ENCODE measurements at regions of chr2 and their contacts with region 1.

Region 1: DNA sequence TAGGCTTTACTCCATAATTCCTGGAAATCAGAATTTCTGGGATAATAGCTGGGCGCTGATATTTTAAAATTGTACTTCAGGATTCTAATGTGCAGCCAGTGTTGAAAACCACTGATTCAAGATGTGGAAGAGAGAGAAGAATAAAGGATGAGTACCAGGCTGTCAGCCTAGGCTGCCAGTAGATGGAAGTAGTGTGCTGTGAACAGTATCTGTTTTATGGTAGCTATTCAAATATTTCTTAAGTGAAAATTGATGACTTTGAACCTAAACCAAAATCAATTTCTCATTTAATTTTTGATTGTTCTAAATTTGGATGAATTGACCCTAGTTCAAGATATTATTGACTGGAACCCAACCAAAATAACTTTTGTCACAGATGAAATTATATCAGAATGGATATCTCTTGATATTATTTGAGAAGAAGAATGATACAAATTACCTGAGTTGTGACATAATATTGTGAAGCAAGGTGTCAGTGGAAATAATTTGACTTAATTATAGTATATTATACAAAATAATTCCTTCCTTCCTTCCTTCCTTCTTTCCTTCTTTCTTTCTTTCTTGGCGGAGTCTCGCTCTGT is 88.1 kb downstream of the COMMD1 start:
- DNase-seq: peak in 2 of 5 donors; percentile 6 to 8
- H3K4me3 ChIP-seq: no peak overlapping the region
- H3K4me3 Mint-ChIP-seq: no peak overlapping the region
- H3K27ac ChIP-seq: no peak overlapping the region
- H3K27ac Mint-ChIP-seq: peak overlapping the region in 2 of 7 donors; percentile 12 to 65
- H3K4me1 ChIP-seq: no peaks in the 10 kb centered on the region
- H3K4me1 Mint-ChIP-seq: peaks cover 0 to 7% (median 3%) of the 10 kb centered on the region in 4 donors
- H3K27me3 ChIP-seq: no peaks in the 10 kb centered on the region
- H3K27me3 Mint-ChIP-seq: no peaks in the 10 kb centered on the region

Region 2: GRCh38 chr2:61854474-61855182 is 138.9 kb before region 1 on chr2:
- CTCF ChIA-PET with region 1: no interaction called
- POLR2A ChIA-PET with region 1: no interaction called
- intact Hi-C with region 1: no loop called
- DNase-seq: peak; percentile 92 to 98 (median 94)
- H3K4me3 ChIP-seq: peak overlapping the region; percentile 85 to 95
- H3K4me3 Mint-ChIP-seq: peak overlapping the region; percentile 94 to 99 (median 96)
- H3K27ac ChIP-seq: peak overlapping the region; percentile 69
- H3K27ac Mint-ChIP-seq: peak overlapping the region; percentile 87 to 98 (median 95)
- H3K4me1 ChIP-seq: peaks cover 16% of the 10 kb centered on the region
- H3K4me1 Mint-ChIP-seq: peaks cover 7 to 25% (median 16%) of the 10 kb centered on the region in 4 donors
- H3K27me3 ChIP-seq: no peaks in the 10 kb centered on the region
- H3K27me3 Mint-ChIP-seq: no peaks in the 10 kb centered on the region

Region 3: DNA sequence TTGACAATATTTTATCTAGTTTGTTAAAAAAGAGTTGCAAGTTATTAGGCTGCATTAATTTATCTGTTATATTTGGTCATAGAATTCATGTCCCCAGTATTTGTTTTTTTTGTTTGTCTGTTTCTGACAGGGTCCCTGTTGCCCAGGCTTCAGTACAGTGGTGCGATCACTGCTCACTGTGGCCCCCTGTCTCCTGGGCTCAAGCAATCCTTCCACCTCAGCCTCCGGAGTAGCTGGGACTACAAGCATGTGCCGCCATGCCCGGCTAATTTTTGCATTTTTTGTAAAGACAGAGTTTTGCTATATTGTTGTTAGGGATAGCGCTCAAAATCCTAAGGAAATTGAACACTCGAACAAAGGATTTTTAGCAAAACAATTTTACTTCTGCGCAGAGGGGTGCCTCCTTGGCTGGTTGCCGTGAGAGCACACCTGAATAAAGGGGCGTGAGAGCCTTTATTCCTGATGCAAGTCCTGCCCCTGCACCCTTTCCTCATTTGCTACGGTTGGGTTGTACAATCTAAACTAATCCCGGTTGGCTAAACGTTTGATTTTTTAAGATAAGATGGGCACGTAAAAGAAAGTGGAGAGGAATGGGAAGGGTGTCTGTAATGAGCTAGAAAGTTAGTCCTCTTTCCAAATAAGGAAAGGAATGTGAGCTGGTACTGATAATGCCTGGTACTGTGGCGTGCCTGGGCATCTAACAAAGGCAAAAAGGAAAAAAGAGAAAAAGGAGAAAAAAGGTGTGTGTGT is 22.6 kb before region 1 on chr2:
- CTCF ChIA-PET with region 1: no interaction called
- POLR2A ChIA-PET with region 1: no interaction called
- intact Hi-C with region 1: no loop called
- DNase-seq: no peak
- H3K4me3 ChIP-seq: no peak overlapping the region
- H3K4me3 Mint-ChIP-seq: no peak overlapping the region
- H3K27ac ChIP-seq: no peak overlapping the region
- H3K27ac Mint-ChIP-seq: no peak overlapping the region
- H3K4me1 ChIP-seq: no peaks in the 10 kb centered on the region
- H3K4me1 Mint-ChIP-seq: peaks cover 0 to 6% (median 4%) of the 10 kb centered on the region in 4 donors
- H3K27me3 ChIP-seq: no peaks in the 10 kb centered on the region
- H3K27me3 Mint-ChIP-seq: no peaks in the 10 kb centered on the region

Region 4: GRCh38 chr2:62415019-62415431 is 421.5 kb after region 1 on chr2:
- CTCF ChIA-PET with region 1: interaction called, 19 read pairs
- POLR2A ChIA-PET with region 1: no interaction called
- intact Hi-C with region 1: loop called (anchors 1 kb)
- DNase-seq: no peak
- H3K4me3 ChIP-seq: no peak overlapping the region
- H3K4me3 Mint-ChIP-seq: no peak overlapping the region
- H3K27ac ChIP-seq: no peak overlapping the region
- H3K27ac Mint-ChIP-seq: peak overlapping the region in 2 of 7 donors; percentile 32 to 46
- H3K4me1 ChIP-seq: peaks cover 4% of the 10 kb centered on the region
- H3K4me1 Mint-ChIP-seq: peaks cover 0 to 17% (median 2%) of the 10 kb centered on the region in 4 donors
- H3K27me3 ChIP-seq: no peaks in the 10 kb centered on the region
- H3K27me3 Mint-ChIP-seq: peaks cover 0 to 3% of the 10 kb centered on the region in 2 donors